CD4-positive, alpha-beta T cell (primary cell): ENCODE measurements at regions of chr15 and their contacts with region 1.

Region 1: GRCh38 chr15:88627463-88627862 is 6.3 kb downstream of the AEN start:
- DNase-seq: peak; percentile 58 to 96 (median 72)
- ATAC-seq: peak; percentile 81
- H3K4me3 ChIP-seq: peak overlapping the region; percentile 1
- H3K4me3 Mint-ChIP-seq: peak overlapping the region; percentile 75
- H3K27ac ChIP-seq: peak overlapping the region; percentile 65 to 75
- H3K27ac Mint-ChIP-seq: peak overlapping the region; percentile 95
- H3K4me1 ChIP-seq: peaks cover 98% of the 10 kb centered on the region
- H3K4me1 Mint-ChIP-seq: peaks cover 94% of the 10 kb centered on the region
- H3K27me3 ChIP-seq: no peaks in the 10 kb centered on the region
- H3K27me3 Mint-ChIP-seq: no peaks in the 10 kb centered on the region
- CTCF ChIP-seq: no peak

Region 2: GRCh38 chr15:88649286-88649733 is 21.8 kb after region 1 on chr15:
- CTCF ChIA-PET with region 1: interaction called, 18 read pairs
- POLR2A ChIA-PET with region 1: interaction called, 83 read pairs
- intact Hi-C with region 1: loop called in 1 of 2 experiments (anchors 1 kb)
- DNase-seq: peak; percentile 35 to 87 (median 64)
- ATAC-seq: peak; percentile 89
- H3K4me3 ChIP-seq: peak overlapping the region; percentile 19
- H3K4me3 Mint-ChIP-seq: peak overlapping the region; percentile 82
- H3K27ac ChIP-seq: peak overlapping the region; percentile 67 to 70
- H3K27ac Mint-ChIP-seq: peak overlapping the region; percentile 95
- H3K4me1 ChIP-seq: peaks cover 97% of the 10 kb centered on the region
- H3K4me1 Mint-ChIP-seq: peaks cover 84% of the 10 kb centered on the region
- H3K27me3 ChIP-seq: no peaks in the 10 kb centered on the region
- H3K27me3 Mint-ChIP-seq: no peaks in the 10 kb centered on the region
- CTCF ChIP-seq: no peak